HEK293 (cell line): ENCODE measurements at regions of chr18 and their contacts with region 1.

Region 1: GRCh38 chr18:45295388-45295787 is 319.9 kb upstream of the SLC14A2 start:
- H3K4me3 ChIP-seq: no peak overlapping the region
- H3K27ac ChIP-seq: no peak overlapping the region
- H3K4me1 ChIP-seq: 0 out of 2 replicates have a peak, but pooled peaks cover 2% of the 10 kb centered on the region
- CTCF ChIP-seq: no peak

Region 2: GRCh38 chr18:45275367-45276113 is 19.8 kb before region 1 on chr18:
- CTCF ChIA-PET with region 1: interaction called, 12 read pairs
- POLR2A ChIA-PET with region 1: no interaction called
- H3K4me3 ChIP-seq: no peak overlapping the region
- H3K27ac ChIP-seq: no peak overlapping the region
- H3K4me1 ChIP-seq: no peaks in the 10 kb centered on the region
- CTCF ChIP-seq: no peak